Right ventricle myocardium inferior (tissue), 1 donor: ENCODE measurements at regions of chr2 and their contacts with region 1.

Region 1: GRCh38 chr2:128062571-128062970 is 28.4 kb upstream of the UGGT1 start:
- DNase-seq: no peak
- ATAC-seq: no peak

Region 2: DNA sequence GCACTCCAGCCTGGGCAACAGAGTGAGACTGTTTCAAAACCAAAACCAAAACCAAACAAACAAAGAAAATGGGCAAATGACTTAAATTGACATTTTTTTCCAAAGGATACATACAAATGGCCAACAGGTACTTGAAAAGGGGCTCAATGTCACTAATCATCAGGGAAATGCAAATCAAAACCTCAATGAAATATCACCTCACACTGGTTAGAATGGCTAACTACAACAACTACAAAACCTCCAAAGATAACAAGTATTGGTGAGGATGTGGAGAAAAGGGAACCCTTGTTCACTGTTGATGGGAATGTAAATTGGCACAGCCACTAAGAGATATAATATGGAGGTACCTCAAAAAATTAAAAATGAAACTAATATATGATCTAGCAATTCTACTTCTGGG is 469.3 kb after region 1 on chr2:
- intact Hi-C with region 1: no loop called
- DNase-seq: no peak
- ATAC-seq: no peak

Region 3: DNA sequence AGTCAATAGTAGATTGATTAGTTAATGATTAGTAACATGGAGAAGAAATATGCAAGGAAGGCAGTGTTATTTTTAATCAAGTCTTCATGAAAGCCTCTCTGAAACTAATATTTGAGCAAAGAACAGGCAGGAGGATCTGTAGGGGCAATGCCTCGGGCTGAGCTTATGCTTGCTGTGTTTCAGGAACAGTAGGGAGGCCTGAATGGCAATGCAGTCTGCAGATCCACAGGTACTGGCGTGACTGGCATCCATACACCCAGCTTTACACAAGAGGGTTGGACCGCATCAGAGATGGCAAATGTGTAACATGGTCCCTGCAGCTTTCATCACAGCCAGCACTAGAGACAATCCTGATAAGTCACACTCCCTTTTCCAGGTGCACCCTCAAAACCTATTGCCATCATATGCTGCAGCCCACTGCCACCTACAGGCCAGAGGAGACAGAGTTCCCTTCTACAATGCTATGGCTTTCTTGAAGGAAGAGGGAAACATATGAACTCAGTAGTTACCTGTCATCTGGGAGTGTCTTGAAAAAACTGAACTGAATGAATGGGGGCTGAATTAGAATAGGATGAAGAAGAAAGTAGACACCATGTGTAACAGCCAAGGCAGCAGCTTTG is 1334.5 kb after region 1 on chr2:
- intact Hi-C with region 1: loop called (anchors 5 kb)
- DNase-seq: peak; percentile 42
- ATAC-seq: no peak